Posterior vena cava (tissue), 2 donors: ENCODE measurements at regions of chr5 and their contacts with region 1.

Region 1: GRCh38 chr5:31976169-31976568 is 197.9 kb downstream of the GOLPH3 start:
- DNase-seq: no peak

Region 2: GRCh38 chr5:32249646-32250045 is 273.5 kb after region 1 on chr5:
- intact Hi-C with region 1: loop called in 1 of 2 experiments (anchors 5 kb)
- DNase-seq: no peak